Calu3 (cell line): ENCODE measurements at regions of chr11 and their contacts with region 1.

Region 1: GRCh38 chr11:76734456-76735420 is 48.4 kb upstream of the TSKU start:
- DNase-seq: no peak
- H3K4me3 Mint-ChIP-seq: no peak overlapping the region
- H3K27ac Mint-ChIP-seq: no peak overlapping the region
- H3K4me1 Mint-ChIP-seq: no peaks in the 10 kb centered on the region
- H3K27me3 Mint-ChIP-seq: peaks cover 32% of the 10 kb centered on the region
- CTCF ChIP-seq: no peak

Region 2: GRCh38 chr11:76680518-76681425 is 54.0 kb before region 1 on chr11:
- CTCF ChIA-PET with region 1: no interaction called
- intact Hi-C with region 1: no loop called
- DNase-seq: peak; percentile 80
- H3K4me3 Mint-ChIP-seq: no peak overlapping the region
- H3K27ac Mint-ChIP-seq: no peak overlapping the region
- H3K4me1 Mint-ChIP-seq: no peaks in the 10 kb centered on the region
- H3K27me3 Mint-ChIP-seq: peaks cover 81% of the 10 kb centered on the region
- CTCF ChIP-seq: peak; percentile 74

Region 3: DNA sequence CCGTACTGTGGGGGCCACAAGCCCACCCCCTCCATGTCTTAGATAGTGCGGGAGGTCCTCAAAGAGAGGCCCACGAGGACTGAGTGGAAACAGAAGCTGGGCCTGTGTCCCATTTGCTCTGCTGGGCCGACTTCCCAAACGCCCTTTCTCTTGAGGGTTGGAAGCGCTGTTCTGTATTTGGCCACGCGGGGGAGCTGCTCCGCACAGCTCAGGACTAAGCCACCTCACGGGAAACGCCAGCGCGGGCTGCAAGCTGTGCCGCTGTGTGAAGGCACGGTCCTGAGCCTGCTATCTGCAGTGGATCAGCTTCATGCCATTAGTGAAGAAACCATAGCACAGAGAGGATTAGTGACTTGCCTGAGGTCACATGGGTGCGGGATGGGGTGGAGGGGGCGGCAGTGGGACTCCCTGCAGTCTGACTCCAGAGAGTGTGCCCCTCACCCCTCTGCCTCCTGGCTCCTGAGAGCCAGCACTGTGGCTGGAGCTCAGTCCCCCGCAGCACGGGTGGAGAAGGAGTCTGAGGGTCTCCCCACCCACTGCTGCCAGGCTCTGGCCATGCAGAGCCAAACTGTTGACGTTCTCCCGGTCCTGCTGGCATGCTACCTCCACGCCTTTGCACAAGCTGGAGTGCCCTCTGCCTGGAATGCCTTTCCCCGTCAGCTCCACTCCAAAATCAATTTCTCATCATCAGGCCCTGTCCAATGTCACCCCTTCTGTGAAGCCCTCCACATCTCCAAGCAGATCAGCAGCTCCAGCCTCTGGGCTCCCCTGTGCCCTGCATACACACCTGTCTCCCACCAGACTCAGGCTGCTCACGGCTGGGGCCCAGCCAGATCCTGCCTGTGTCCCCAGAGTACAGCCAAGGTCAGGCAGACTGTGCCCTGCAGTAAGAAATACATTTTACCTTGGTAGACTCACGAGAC is 12.7 kb before region 1 on chr11:
- CTCF ChIA-PET with region 1: interaction called, 13 read pairs
- intact Hi-C with region 1: no loop called
- DNase-seq: peak; percentile 86
- H3K4me3 Mint-ChIP-seq: no peak overlapping the region
- H3K27ac Mint-ChIP-seq: no peak overlapping the region
- H3K4me1 Mint-ChIP-seq: peaks cover 10% of the 10 kb centered on the region
- H3K27me3 Mint-ChIP-seq: peaks cover 50% of the 10 kb centered on the region
- CTCF ChIP-seq: peak; percentile 84

Region 4: GRCh38 chr11:76788661-76789439 is 54.1 kb after region 1 on chr11:
- CTCF ChIA-PET with region 1: interaction called, 14 read pairs
- intact Hi-C with region 1: no loop called
- DNase-seq: peak; percentile 93
- H3K4me3 Mint-ChIP-seq: peak overlapping the region; percentile 56
- H3K27ac Mint-ChIP-seq: peak overlapping the region; percentile 84
- H3K4me1 Mint-ChIP-seq: peaks cover 63% of the 10 kb centered on the region
- H3K27me3 Mint-ChIP-seq: no peaks in the 10 kb centered on the region
- CTCF ChIP-seq: no peak

Region 5: DNA sequence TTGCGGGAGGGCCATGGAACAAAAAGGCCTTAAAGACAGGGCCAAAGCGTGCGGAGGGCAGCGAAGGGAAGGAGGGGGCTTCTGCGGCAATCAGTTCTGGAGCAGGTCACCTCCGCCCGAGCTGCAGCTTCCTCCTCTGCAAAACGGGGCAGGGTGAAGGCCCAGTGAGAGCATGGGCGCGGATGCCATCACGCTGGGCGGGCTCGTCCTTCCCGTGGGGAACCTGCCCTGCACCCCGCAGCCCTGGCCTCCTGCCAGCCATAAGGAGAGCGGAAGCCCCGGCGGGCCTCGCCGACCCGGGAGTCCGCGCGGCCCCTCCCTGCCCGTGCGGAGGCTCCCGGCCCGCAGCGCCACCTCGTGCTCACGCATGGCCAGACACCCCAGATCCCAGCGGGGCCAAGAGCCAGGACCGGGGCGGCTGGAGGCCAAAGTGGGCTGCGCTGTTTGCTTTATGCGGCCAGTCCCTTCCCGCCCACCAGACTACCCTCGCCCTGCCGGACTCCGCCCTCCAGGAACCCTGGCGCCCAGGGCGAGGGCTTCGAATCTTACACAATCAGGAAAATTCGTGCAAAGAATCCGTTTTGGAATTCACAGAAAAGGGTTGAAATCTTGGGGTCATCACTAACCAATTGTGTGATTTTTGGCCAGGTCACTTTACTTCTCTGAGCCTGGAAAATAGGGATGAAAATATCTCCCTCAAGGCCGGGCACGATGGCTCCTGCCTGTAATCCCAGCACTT is 64.5 kb after region 1 on chr11:
- CTCF ChIA-PET with region 1: interaction called, 39 read pairs
- intact Hi-C with region 1: loop called (anchors 1 kb)
- DNase-seq: peak; percentile 90
- H3K4me3 Mint-ChIP-seq: peak overlapping the region; percentile 21
- H3K27ac Mint-ChIP-seq: peak overlapping the region; percentile 74
- H3K4me1 Mint-ChIP-seq: peaks cover 14% of the 10 kb centered on the region
- H3K27me3 Mint-ChIP-seq: no peaks in the 10 kb centered on the region
- CTCF ChIP-seq: peak; percentile 90

Region 6: GRCh38 chr11:76807206-76807875 is 72.6 kb after region 1 on chr11:
- CTCF ChIA-PET with region 1: interaction called, 5 read pairs
- intact Hi-C with region 1: loop called (anchors 2 kb)
- DNase-seq: peak; percentile 90
- H3K4me3 Mint-ChIP-seq: no peak overlapping the region
- H3K27ac Mint-ChIP-seq: peak overlapping the region; percentile 17
- H3K4me1 Mint-ChIP-seq: peaks cover 19% of the 10 kb centered on the region
- H3K27me3 Mint-ChIP-seq: no peaks in the 10 kb centered on the region
- CTCF ChIP-seq: peak; percentile 87

Region 7: GRCh38 chr11:76823481-76824078 is 88.8 kb after region 1 on chr11:
- CTCF ChIA-PET with region 1: no interaction called
- intact Hi-C with region 1: no loop called
- DNase-seq: peak; percentile 37
- H3K4me3 Mint-ChIP-seq: peak overlapping the region; percentile 34
- H3K27ac Mint-ChIP-seq: peak overlapping the region; percentile 12
- H3K4me1 Mint-ChIP-seq: peaks cover 15% of the 10 kb centered on the region
- H3K27me3 Mint-ChIP-seq: no peaks in the 10 kb centered on the region
- CTCF ChIP-seq: no peak